Activated T-helper 1 cell treated with anti-CD3 and anti-CD28 coated beads, Interleukin-12 subunit alpha, Interleukin-12 subunit beta, Interleukin-2, Interleukin-4 antibody, amounts not matched to agents 30 ng/mL and 10 ng/mL and 1 ng/mL, durations not matched to agents 14 hours and 24 hours and 36 hours (primary cell): ENCODE measurements at regions of chr2 and their contacts with region 1.

Region 1: DNA sequence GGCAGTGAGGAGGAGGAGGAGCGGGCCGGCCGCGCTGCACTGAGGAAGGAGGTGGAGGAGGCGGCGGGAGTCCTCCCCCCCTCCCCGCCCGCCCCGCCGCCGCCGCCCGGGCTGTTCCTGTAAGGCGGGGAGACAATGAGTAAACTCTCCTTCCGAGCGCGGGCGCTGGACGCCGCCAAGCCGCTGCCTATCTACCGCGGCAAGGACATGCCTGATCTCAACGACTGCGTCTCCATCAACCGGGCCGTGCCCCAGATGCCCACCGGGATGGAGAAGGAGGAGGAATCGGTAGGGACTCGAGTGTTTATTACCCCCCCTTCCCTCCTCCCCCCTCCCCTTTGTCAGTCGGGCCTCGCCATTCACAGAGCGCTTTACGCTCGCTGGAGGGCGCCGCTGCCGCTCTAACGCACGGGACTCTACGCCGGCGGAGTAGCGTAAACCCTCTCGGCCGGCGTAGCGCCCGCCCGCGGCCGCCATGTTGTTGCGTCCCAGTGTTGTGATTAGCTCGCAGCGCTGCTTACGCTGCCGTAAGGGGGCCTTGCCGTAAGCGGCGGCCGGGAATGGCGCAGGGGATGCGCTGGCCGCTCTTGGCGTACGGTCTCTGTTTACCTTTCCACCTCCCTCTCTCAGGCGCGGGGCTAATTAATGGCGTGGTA is 460 bp downstream of the EPC2 start:
- DNase-seq: peak; percentile 92
- H3K4me3 Mint-ChIP-seq: peak overlapping the region; percentile 93
- H3K27ac Mint-ChIP-seq: peak overlapping the region; percentile 96
- H3K4me1 Mint-ChIP-seq: peaks cover 31% of the 10 kb centered on the region
- H3K27me3 Mint-ChIP-seq: peaks cover 7% of the 10 kb centered on the region

Region 2: DNA sequence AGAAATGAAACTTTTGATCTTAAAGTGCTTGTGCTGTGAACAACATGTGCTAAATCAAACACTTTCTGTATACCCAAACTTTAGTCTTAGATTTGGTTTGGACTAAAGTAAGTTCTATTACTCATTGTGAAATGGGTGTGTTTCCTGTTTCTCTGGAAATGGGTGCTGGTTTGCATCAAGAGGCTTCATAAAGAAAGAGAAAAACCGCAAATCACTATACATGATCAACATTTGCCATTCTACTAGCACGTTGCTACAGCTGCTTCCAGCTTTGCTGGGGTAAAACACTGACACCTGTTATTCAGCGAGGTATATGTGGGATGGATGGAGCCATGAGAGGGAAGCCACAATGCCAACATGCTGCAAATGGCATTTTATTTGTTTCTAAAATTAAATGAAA is 1347.2 kb before region 1 on chr2:
- intact Hi-C with region 1: loop called (anchors 10 kb)
- DNase-seq: peak; percentile 49
- H3K4me3 Mint-ChIP-seq: peak overlapping the region; percentile 36
- H3K27ac Mint-ChIP-seq: peak overlapping the region; percentile 89
- H3K4me1 Mint-ChIP-seq: peaks cover 72% of the 10 kb centered on the region
- H3K27me3 Mint-ChIP-seq: no peaks in the 10 kb centered on the region

Region 3: DNA sequence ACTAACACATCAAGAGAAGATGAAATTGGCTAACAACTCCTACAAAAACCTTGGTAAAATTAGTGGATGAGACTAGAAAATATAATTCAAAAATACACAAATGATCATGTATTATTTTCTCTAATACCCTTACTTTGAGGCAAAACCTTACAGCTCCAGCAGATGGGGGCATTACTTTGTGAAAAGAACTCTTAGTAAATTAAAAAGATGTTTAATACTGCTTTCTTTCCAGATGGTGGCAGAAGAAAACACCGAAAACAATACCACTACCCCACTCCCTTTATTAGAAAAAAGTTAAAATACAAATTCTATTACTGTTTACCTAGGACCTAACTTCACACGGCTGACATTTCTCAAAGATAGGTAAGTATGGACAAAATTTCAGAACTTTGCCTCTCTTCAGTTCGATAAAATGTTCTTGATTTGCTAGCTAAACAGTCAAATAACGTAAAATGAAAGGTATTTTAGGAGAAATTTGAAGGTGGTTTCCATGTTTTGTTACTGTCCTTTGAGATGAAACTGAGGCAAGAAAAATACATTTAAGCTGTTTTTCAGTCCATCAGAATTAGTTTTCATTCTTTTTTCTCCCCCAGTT is 655.1 kb before region 1 on chr2:
- intact Hi-C with region 1: loop called (anchors 1 kb)
- DNase-seq: no peak
- H3K4me3 Mint-ChIP-seq: no peak overlapping the region
- H3K27ac Mint-ChIP-seq: no peak overlapping the region
- H3K4me1 Mint-ChIP-seq: peaks cover 6% of the 10 kb centered on the region
- H3K27me3 Mint-ChIP-seq: no peaks in the 10 kb centered on the region

Region 4: DNA sequence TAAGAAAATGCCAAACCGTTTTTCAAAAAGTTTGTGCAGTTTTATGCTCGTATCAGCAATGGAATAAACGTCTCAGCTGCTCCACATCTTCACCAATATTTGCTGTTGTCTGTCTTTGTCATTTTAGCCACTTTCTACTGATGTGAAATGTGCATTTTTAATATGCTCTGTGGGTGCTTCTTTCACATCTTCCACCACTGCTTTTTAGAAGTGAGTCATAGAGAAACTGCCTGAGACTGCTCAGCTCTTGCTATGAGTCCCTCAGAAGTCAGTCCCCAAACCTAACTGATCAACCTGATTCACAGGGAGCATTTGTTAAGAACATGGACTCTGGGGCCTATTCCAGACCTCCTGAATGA is 41.5 kb before region 1 on chr2:
- intact Hi-C with region 1: loop called (anchors 1 kb)
- DNase-seq: peak; percentile 40
- H3K4me3 Mint-ChIP-seq: no peak overlapping the region
- H3K27ac Mint-ChIP-seq: peak overlapping the region; percentile 96
- H3K4me1 Mint-ChIP-seq: peaks cover 29% of the 10 kb centered on the region
- H3K27me3 Mint-ChIP-seq: peaks cover 13% of the 10 kb centered on the region

Region 5: DNA sequence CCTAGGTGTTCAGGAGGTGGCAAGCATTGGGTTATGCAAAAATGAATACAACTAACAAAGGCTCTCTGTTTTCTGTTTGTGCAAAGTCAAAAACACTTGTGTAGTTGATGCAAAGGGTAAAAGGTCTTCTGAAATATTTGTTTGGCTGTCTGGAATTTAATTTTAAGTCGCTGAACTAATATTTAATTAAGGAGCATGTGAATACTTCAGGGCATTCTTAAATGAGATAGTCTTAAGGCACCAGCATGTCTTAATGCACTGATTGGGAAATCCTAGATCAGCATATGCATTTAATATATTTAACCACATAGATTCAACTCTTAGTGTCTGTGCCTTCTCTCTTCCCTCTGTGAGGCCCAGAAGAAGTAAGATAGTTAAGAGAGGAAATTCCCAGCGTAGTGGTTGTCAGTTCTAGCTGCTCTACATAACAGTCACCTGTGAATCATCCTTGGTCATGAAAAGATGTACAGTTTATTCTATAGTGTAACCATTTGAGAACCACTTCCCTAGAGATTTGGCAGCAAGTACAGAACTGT is 111.5 kb after region 1 on chr2:
- intact Hi-C with region 1: no loop called
- DNase-seq: no peak
- H3K4me3 Mint-ChIP-seq: no peak overlapping the region
- H3K27ac Mint-ChIP-seq: no peak overlapping the region
- H3K4me1 Mint-ChIP-seq: peaks cover 10% of the 10 kb centered on the region
- H3K27me3 Mint-ChIP-seq: no peaks in the 10 kb centered on the region

Region 6: DNA sequence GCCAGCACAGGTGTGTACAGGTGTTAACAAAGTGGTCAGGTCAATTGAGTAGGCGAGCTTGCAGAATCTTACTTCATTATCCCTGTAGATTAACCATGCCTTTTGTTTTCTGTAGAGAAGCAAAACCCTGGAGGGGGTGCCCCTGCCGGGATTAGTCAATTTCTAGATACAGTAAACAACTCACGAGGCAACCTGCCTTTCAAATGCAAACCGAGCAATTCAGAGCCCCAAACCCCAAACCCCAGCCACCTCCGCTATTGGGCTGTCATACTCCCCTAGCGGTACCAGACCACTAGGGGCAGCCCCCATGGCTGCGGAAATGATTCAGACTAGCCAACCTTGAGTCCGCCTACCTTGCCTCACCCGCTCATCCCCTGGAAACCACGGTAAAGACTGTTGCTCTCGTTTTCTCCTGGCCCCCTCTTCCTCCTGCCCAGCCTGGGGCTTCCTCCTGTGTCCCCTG is 168.6 kb after region 1 on chr2:
- intact Hi-C with region 1: loop called (anchors 1 kb)
- DNase-seq: peak; percentile 43
- H3K4me3 Mint-ChIP-seq: no peak overlapping the region
- H3K27ac Mint-ChIP-seq: no peak overlapping the region
- H3K4me1 Mint-ChIP-seq: peaks cover 11% of the 10 kb centered on the region
- H3K27me3 Mint-ChIP-seq: peaks cover 13% of the 10 kb centered on the region

Region 7: GRCh38 chr2:148842050-148842449 is 197.0 kb after region 1 on chr2:
- intact Hi-C with region 1: no loop called
- DNase-seq: no peak
- H3K4me3 Mint-ChIP-seq: no peak overlapping the region
- H3K27ac Mint-ChIP-seq: no peak overlapping the region
- H3K4me1 Mint-ChIP-seq: no peaks in the 10 kb centered on the region
- H3K27me3 Mint-ChIP-seq: peaks cover 16% of the 10 kb centered on the region

Region 8: DNA sequence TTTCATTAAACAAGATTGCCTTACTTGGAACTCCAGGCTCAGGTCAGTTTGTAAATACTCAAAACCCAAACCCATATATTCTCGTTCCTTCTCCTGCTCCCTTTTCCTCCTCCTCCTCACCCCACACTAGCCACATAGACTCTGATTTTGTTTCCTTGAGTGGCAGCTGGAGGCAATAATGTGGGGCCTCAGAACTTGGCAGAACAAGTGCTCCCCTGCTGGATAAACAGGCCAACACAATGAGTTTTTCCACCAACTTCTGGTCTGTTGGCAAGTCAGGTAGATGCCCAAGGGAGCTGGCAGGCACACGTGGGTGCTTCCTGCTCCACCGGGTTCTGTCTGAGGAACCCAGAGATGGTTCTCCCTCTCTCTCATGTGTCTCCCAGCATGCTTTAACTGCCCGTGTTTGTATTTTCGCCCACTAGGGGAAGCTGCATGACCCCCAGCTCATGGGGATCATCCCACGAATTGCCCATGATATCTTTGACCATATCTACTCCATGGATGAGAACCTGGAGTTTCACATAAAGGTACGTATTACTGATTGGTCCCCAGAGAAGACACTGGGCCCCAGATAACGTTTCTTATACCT is 291.9 kb after region 1 on chr2:
- intact Hi-C with region 1: no loop called
- DNase-seq: no peak
- H3K4me3 Mint-ChIP-seq: no peak overlapping the region
- H3K27ac Mint-ChIP-seq: no peak overlapping the region
- H3K4me1 Mint-ChIP-seq: no peaks in the 10 kb centered on the region
- H3K27me3 Mint-ChIP-seq: no peaks in the 10 kb centered on the region

Region 9: GRCh38 chr2:148989882-148990493 is 345.0 kb after region 1 on chr2:
- intact Hi-C with region 1: loop called (anchors 1 kb)
- DNase-seq: peak; percentile 30
- H3K4me3 Mint-ChIP-seq: no peak overlapping the region
- H3K27ac Mint-ChIP-seq: no peak overlapping the region
- H3K4me1 Mint-ChIP-seq: peaks cover 4% of the 10 kb centered on the region
- H3K27me3 Mint-ChIP-seq: no peaks in the 10 kb centered on the region